ENCODE measurements at regions of chr10 and their contacts with region 1.

Region 1: GRCh38 chr10:89389254-89389653 is 3.2 kb upstream of the IFIT1 start:
- DNase-seq: peak; percentile 22
- ATAC-seq: peak; percentile 38; the same call in 1 of the 2 replicates
- H3K4me3 ChIP-seq: no peak overlapping the region
- H3K27ac ChIP-seq: no peak overlapping the region
- H3K4me1 ChIP-seq: peaks cover 2 to 11% of the 10 kb centered on the region in 2 experiments; a peak in 3 of 4 replicates
- H3K27me3 ChIP-seq: no peaks in the 10 kb centered on the region
- CTCF ChIP-seq: peak in 2 of 3 experiments; percentile 44 to 70; a peak in 3 of 6 replicates
- POLR2A ChIP-seq: no peak
- RAD21 ChIP-seq: peak; percentile 81

Region 2: DNA sequence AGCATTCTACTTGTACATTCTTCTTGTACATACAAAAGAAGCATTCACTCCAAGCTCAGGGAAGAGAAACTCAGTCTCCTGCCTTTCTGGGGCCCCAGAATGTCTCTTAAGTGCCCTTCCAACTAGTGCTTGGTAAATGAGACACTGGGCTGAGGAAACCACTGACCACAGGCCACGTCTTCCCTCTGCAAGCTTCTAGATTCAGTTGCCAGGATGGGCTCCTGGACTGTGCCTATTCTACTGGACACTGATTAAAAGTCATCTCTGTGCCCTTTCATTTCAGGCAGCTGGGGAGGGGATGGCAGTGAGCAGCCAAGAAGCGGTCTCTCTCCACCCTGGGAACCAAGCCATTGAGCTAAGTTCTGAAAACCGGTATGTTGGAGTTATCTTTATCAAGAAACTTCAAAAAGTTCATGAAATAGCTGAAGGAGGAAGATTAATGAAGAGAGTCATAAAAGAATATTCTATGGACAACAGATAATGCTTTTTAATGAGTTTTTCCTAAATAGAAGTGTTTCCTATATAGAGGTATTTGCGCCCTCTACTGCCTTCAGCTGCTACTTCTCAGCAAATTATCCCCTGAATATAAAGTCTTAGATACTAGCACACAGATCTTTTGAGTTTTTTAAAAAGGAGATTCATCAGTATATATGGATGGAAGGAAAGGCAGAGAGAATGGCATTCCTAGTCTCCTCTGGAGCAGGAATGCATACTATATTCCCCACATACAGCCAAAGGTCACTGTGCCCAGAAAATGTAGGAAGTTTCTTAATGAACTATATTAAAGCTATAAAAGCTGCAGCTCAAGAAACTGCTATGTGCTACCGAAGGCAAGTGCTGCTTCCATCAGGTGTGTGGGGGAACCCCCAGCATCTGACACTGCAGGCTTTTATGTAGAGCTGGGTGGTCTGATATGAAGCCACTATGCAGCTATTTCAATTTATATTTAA is 19.8 kb before region 1 on chr10:
- CTCF ChIA-PET with region 1: interaction called, 11 read pairs
- POLR2A ChIA-PET with region 1: no interaction called
- RAD21 ChIA-PET with region 1: interaction called in 1 of 2 experiments, 3 read pairs
- intact Hi-C with region 1: no loop called
- DNase-seq: no peak
- ATAC-seq: peak; percentile 59
- H3K4me3 ChIP-seq: no peak overlapping the region
- H3K27ac ChIP-seq: no peak overlapping the region
- H3K4me1 ChIP-seq: no peaks in the 10 kb centered on the region
- H3K27me3 ChIP-seq: no peaks in the 10 kb centered on the region
- CTCF ChIP-seq: peak; percentile 51 to 82 (median 69); a peak in 5 of 6 replicates
- POLR2A ChIP-seq: no peak
- RAD21 ChIP-seq: peak; percentile 85

Measured in HCT116 (cell line).